GM12878 (cell line): ENCODE measurements at regions of chr1 and their contacts with region 1.

Region 1: GRCh38 chr1:172818841-172819527 is 160.1 kb downstream of the FASLG start:
- DNase-seq: peak; percentile 99
- ATAC-seq: peak; percentile 95
- H3K4me3 ChIP-seq: no peak overlapping the region; the same call in 1 of the 2 replicates
- H3K27ac ChIP-seq: peak overlapping the region; percentile 73
- H3K4me1 ChIP-seq: peaks cover 32% of the 10 kb centered on the region
- H3K27me3 ChIP-seq: no peaks in the 10 kb centered on the region
- CTCF ChIP-seq: no peak
- EP300 ChIP-seq: peak; percentile 91 to 92
- POLR2A ChIP-seq: no peak
- RAD21 ChIP-seq: peak; percentile 23; the same call in 1 of the 2 replicates

Region 2: DNA sequence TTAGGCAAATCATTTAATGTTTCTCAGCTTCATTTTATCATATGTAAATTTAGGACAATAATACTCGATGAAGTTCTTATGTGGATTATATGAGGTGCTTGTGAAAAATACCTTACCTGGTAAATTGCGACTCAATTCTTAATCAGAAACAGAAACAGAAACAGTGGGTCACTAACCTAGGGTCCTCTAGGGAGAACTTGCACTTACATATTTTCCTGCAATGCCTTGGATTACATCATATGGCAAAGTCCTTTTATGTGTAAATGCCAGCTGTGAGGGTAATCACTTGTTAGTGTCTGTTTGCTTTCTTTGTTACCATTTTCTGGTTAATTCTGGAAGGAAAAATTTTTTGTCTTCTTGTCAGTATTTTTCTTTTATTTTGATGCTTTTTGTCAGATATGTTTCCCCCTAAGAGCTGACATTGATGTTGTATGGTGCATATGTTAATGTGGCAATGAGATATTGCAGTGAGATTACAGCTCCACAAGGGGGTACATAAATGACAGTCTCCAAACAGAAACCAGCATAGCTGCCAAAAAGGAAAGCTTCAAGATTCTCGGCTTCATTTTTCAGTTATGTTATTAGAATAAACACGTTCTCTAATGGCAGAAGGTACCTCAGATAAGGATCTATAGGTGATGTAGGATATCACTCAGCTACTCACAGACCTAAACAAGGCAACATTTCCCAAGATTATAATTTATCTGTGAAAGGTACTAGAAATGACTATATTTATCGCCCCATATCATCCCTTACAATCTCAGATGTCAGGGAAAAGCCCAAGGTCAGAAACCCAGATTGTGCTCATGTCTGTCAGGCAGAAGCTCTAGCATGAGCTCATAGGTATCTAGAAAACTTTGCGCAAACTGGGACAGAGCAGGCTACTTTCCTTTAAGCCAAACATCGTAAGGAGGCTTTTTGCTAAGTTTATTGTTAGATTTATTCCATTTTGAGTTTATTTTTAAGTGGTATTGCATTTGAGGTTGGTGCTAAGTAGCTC is 40.2 kb before region 1 on chr1:
- CTCF ChIA-PET with region 1: interaction called, 21 read pairs
- POLR2A ChIA-PET with region 1: interaction called, 5 read pairs
- RAD21 ChIA-PET with region 1: interaction called, 6 read pairs
- SMC1A ChIA-PET with region 1: interaction called, 39 read pairs
- in situ Hi-C with region 1: no loop called
- intact Hi-C with region 1: loop called (anchors 1 kb)
- DNase-seq: peak; percentile 23
- ATAC-seq: peak; percentile 86
- H3K4me3 ChIP-seq: no peak overlapping the region
- H3K27ac ChIP-seq: no peak overlapping the region
- H3K4me1 ChIP-seq: peaks cover 30% of the 10 kb centered on the region
- H3K27me3 ChIP-seq: peaks cover 0 to 8% of the 10 kb centered on the region in 2 experiments; a peak in 3 of 4 replicates
- CTCF ChIP-seq: peak; percentile 19 to 40 (median 28); a peak in 3 of 6 replicates
- EP300 ChIP-seq: no peak
- POLR2A ChIP-seq: no peak
- RAD21 ChIP-seq: peak; percentile 55

Region 3: GRCh38 chr1:173020138-173020750 is 201.3 kb after region 1 on chr1:
- CTCF ChIA-PET with region 1: interaction called, 4 read pairs
- POLR2A ChIA-PET with region 1: no interaction called
- RAD21 ChIA-PET with region 1: interaction called, 4 read pairs
- SMC1A ChIA-PET with region 1: interaction called, 10 read pairs
- in situ Hi-C with region 1: no loop called
- intact Hi-C with region 1: no loop called
- DNase-seq: peak; percentile 66
- ATAC-seq: peak; percentile 96
- H3K4me3 ChIP-seq: no peak overlapping the region
- H3K27ac ChIP-seq: peak overlapping the region; percentile 76
- H3K4me1 ChIP-seq: peaks cover 12% of the 10 kb centered on the region
- H3K27me3 ChIP-seq: no peaks in the 10 kb centered on the region
- CTCF ChIP-seq: no peak
- EP300 ChIP-seq: peak; percentile 47 to 62; a peak in 2 of 4 replicates
- POLR2A ChIP-seq: no peak
- RAD21 ChIP-seq: no peak

Region 4: DNA sequence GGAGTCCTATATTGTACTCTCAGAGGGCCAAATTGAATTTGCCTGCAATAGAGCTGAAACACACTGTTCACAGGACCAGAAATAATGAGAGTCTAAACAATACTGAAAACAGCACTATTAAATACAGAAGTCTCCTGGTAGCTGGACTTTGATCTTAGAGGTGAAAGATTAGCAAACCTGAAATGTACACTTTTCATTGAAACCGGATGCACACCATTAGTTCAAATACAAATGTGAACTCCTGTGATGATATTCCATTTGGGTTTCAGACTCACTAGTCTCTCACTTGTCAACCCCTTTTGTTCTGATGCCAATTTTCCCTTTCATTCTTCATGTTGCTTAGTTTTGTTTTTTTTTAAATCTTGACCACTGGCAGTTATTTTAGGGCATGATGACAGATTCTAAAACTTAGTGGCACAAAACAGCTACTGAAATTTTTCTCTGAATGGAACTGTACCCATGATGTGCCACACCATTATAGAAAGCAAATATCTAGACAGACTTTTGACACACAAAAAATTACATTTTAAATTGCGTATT is 394.0 kb after region 1 on chr1:
- CTCF ChIA-PET with region 1: interaction called, 3 read pairs
- POLR2A ChIA-PET with region 1: interaction called, 6 read pairs
- RAD21 ChIA-PET with region 1: interaction called, 3 read pairs
- SMC1A ChIA-PET with region 1: interaction called, 10 read pairs
- in situ Hi-C with region 1: no loop called
- intact Hi-C with region 1: no loop called
- DNase-seq: peak; percentile 90
- ATAC-seq: peak; percentile 91
- H3K4me3 ChIP-seq: no peak overlapping the region
- H3K27ac ChIP-seq: no peak overlapping the region
- H3K4me1 ChIP-seq: peaks cover 5% of the 10 kb centered on the region
- H3K27me3 ChIP-seq: no peaks in the 10 kb centered on the region
- CTCF ChIP-seq: no peak
- EP300 ChIP-seq: peak; percentile 58 to 92; a peak in 3 of 4 replicates
- POLR2A ChIP-seq: no peak
- RAD21 ChIP-seq: 0 out of 2 replicates have a peak, but pooled peaks have one; percentile 13